CD8-positive, alpha-beta T cell (primary cell): ENCODE measurements at regions of chr3 and their contacts with region 1.

Region 1: DNA sequence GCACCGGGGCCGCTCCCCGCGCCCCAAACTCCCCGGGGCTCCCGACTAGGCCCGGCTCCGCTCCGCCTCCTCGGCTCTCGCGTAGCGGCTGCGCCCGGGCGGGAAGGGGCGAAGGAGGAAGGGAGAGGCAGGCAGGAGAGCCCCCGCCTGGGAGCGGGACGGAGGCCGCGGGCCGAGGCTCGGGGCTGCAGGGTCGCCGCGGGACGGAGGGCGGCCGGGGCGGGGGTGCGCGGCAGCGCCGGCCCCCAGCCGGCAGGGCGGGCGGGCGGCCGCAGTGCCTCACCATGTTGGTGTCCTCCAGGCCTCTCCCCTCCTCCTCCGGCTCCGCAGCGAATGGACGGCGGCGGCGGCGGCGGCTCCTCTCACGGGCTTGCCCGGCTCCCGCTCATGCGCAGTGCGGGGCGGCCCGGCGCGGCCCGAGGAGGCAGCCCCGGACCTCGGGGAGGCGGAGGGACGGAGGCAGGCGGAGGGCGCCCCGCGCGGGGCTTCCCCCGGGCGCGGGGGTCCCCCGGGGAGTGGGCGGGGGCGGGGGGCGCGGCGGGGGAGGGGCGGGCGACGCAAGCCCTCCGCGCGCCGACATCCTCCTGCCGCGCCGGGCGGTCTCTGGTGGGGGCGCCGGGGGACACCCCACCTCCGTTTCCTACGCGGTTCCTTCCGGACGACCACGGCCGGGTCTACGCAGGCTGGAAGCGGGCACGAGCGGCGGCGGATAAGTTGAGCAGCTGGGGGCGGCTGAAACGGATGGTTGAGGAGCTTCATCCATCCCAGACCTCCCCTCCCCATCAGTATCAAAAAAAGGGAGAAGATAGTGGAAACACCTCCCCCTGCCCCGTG is at the start of gene DCUN1D1:
- DNase-seq: peak; percentile 71 to 93 (median 85)
- ATAC-seq: peak; percentile 83
- H3K4me3 ChIP-seq: peak within 1 kb of the TSS; percentile 78 to 90
- H3K4me3 Mint-ChIP-seq: peak within 1 kb of the TSS; percentile 86
- H3K27ac ChIP-seq: peak within 1 kb of the TSS; percentile 63 to 80
- H3K27ac Mint-ChIP-seq: peak within 1 kb of the TSS; percentile 90
- H3K4me1 ChIP-seq: peaks cover 25% of the 10 kb centered on the region
- H3K4me1 Mint-ChIP-seq: peaks cover 39% of the 10 kb centered on the region
- H3K27me3 ChIP-seq: no peaks in the 10 kb centered on the region
- H3K27me3 Mint-ChIP-seq: no peaks in the 10 kb centered on the region
- CTCF ChIP-seq: no peak
- total RNA-seq, gene DCUN1D1: 45.3 to 50.4 TPM

Region 2: GRCh38 chr3:182294256-182294655 is 686.2 kb before region 1 on chr3:
- CTCF ChIA-PET with region 1: no interaction called
- POLR2A ChIA-PET with region 1: no interaction called
- intact Hi-C with region 1: no loop called
- DNase-seq: no peak
- ATAC-seq: no peak
- H3K4me3 ChIP-seq: no peak overlapping the region
- H3K4me3 Mint-ChIP-seq: no peak overlapping the region
- H3K27ac ChIP-seq: no peak overlapping the region
- H3K27ac Mint-ChIP-seq: no peak overlapping the region
- H3K4me1 ChIP-seq: no peaks in the 10 kb centered on the region
- H3K4me1 Mint-ChIP-seq: no peaks in the 10 kb centered on the region
- H3K27me3 ChIP-seq: no peaks in the 10 kb centered on the region
- H3K27me3 Mint-ChIP-seq: no peaks in the 10 kb centered on the region
- CTCF ChIP-seq: no peak

Region 3: DNA sequence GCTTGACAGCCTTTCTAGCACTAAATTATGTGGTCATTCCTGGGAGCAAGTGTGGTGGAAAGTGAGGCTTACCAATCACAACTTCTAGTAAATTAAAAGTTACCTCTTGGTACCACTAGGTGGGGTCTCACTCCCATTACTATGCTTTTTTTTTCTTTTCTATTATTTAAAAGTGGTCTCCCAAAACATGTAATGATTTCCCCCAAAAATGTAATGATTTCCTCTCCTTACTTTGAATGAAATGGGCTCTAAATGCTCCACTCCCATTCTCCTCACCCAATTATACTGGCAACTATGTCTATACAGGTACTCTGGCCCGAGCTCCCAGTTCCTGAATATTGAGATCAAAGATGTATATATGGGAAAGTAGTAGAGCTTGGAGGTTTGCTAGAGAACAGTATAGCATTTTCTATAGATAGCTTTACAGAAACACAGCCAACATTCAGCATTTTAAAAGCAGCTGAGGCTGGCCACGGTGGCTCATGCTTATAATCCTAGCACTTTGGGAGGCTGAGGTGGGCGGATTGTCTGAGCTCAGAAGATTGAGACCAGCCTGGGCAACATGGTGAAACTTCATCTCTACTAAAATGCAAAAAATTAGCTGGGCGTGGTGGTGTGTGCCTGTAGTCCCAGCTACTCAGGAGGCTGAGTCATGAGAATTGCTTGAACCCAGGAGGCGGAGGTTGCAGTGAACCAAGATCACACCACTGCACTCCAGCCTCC is 70.9 kb before region 1 on chr3:
- CTCF ChIA-PET with region 1: no interaction called
- POLR2A ChIA-PET with region 1: no interaction called
- intact Hi-C with region 1: loop called in 1 of 2 experiments (anchors 5 kb)
- DNase-seq: peak in 2 of 9 experiments; percentile 28 to 49
- ATAC-seq: peak; percentile 41
- H3K4me3 ChIP-seq: no peak overlapping the region
- H3K4me3 Mint-ChIP-seq: no peak overlapping the region
- H3K27ac ChIP-seq: no peak overlapping the region
- H3K27ac Mint-ChIP-seq: no peak overlapping the region
- H3K4me1 ChIP-seq: peaks cover 20% of the 10 kb centered on the region
- H3K4me1 Mint-ChIP-seq: peaks cover 43% of the 10 kb centered on the region
- H3K27me3 ChIP-seq: no peaks in the 10 kb centered on the region
- H3K27me3 Mint-ChIP-seq: no peaks in the 10 kb centered on the region
- CTCF ChIP-seq: peak; percentile 70

Region 4: GRCh38 chr3:182969277-182969676 is 11.1 kb before region 1 on chr3:
- CTCF ChIA-PET with region 1: interaction called, 12 read pairs
- POLR2A ChIA-PET with region 1: interaction called, 4 read pairs
- intact Hi-C with region 1: no loop called
- DNase-seq: no peak
- ATAC-seq: no peak
- H3K4me3 ChIP-seq: no peak overlapping the region
- H3K4me3 Mint-ChIP-seq: no peak overlapping the region
- H3K27ac ChIP-seq: no peak overlapping the region
- H3K27ac Mint-ChIP-seq: no peak overlapping the region
- H3K4me1 ChIP-seq: peaks cover 22% of the 10 kb centered on the region
- H3K4me1 Mint-ChIP-seq: peaks cover 64% of the 10 kb centered on the region
- H3K27me3 ChIP-seq: no peaks in the 10 kb centered on the region
- H3K27me3 Mint-ChIP-seq: no peaks in the 10 kb centered on the region
- CTCF ChIP-seq: no peak

Region 5: DNA sequence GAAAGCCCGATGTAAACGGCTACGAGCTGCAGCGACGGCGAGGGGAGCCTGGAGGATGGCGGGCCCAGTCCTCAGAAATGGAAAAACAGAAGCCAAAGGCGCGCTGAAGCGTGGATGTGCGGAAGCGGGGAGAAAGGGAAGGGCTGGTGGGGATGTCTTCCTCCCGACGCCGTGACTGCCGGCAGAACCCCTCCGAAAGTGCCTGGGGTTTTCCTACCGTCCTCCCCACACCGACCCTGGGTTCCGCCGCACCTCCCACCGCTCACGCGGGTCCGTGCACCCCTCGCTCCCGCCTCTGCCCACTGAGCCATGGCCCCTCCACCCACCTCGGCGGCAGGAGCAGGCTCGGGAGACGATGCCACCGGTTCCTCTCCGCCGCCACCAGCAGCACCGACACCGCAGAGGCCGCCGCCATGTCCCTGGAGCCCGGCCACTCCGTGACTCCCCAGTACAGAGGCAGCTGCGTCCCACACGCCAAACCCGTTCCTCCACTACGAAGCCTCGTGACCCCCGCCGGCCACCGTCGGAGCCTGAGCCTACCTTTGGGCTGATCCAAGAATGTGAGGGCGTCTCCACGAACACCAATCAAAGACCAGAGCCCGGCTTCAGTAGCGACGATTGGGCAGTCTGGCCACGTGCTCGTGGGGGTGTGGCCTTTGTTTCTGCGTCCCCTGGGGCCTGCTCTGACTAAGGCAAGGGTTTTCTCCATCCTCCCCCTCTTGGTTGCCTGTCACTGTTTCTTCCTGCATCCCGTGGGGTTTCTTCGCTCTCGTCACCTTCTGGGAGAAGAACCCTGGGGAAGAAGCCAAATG is 118.8 kb after region 1 on chr3 and contains the start of gene MCCC1:
- CTCF ChIA-PET with region 1: no interaction called
- POLR2A ChIA-PET with region 1: no interaction called
- intact Hi-C with region 1: loop called (anchors 1 to 2 kb)
- DNase-seq: peak; percentile 93 to 99 (median 97)
- ATAC-seq: peak; percentile 97
- H3K4me3 ChIP-seq: peak within 1 kb of the TSS; percentile 85 to 86
- H3K4me3 Mint-ChIP-seq: peak within 1 kb of the TSS; percentile 98
- H3K27ac ChIP-seq: peak within 1 kb of the TSS; percentile 72 to 76
- H3K27ac Mint-ChIP-seq: peak within 1 kb of the TSS; percentile 98
- H3K4me1 ChIP-seq: peaks cover 24% of the 10 kb centered on the region
- H3K4me1 Mint-ChIP-seq: peaks cover 43% of the 10 kb centered on the region
- H3K27me3 ChIP-seq: no peaks in the 10 kb centered on the region
- H3K27me3 Mint-ChIP-seq: no peaks in the 10 kb centered on the region
- CTCF ChIP-seq: no peak
- total RNA-seq, gene MCCC1: 12.8 to 25.9 TPM